GM13976 (cell line): ENCODE measurements at regions of chr16 and their contacts with region 1.

Region 1: GRCh38 chr16:81885976-81886586 is 107.0 kb downstream of the PLCG2 start:
- DNase-seq: peak; percentile 66
- CTCF ChIP-seq: peak; percentile 51

Region 2: DNA sequence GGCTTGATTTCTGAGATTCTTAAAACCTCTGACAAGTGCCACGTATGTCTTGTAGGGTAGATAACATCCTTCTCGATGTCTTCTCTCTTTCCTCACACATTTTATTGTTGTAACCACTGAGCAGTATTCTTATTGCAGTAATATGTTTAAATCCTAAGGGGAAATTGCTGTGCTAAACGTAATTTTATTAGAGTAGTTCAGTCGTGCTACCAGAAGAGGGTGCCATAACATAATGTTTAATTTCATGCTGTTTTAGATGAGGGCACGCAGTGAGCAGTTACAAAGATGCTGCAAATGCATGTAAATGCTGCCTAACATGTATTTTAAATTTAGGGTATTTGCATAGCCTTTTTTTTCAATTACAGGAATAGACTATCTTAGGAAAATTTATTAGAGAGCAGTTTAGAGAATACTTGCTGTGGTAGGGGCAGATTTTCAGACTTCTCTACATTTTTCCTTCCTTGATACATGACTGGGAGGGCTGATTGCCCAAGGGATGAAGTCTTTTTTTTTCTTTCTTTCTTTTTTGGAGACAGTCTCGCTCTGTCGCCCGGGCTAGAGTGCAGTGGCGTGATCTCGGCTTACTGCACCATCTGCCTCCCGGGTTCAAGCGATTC is 519.7 kb before region 1 on chr16:
- in situ Hi-C with region 1: loop called (anchors 25 kb)
- DNase-seq: peak; percentile 61
- CTCF ChIP-seq: peak; percentile 56